ENCODE measurements at regions of chr1 and their contacts with region 1.

Region 1: DNA sequence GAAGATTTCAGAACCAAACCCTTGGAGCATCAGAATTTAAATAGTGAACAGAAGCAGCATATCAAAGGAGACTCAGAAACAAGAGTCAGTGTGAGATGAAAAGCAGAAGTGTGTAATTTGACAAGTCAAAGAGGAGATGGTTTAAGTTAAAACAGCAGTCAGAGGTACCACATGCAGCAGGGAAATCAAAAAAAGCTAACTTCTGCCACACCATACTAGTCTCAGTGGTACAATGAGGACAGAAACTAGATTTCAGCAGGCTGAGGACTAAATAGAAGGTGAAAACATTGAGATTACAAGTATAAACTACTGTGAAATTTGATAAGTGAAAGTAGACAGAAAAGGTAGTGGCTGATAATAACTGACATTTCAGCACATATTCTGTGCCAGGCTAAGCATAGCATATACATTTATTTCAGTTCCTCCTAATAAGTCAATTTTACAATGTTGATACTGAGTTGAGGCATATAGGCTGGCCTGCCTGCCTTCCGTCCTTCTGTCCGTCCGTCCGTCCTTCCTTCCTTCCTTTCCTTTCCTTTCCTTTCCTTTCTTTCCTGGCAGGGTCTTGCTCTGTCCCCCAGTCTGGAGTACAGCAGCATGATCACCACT is 12.6 kb downstream of the SUCO start:
- DNase-seq: no peak
- ATAC-seq: peak; percentile 11
- H3K4me3 ChIP-seq: no peak overlapping the region
- H3K27ac ChIP-seq: no peak overlapping the region
- H3K4me1 ChIP-seq: peaks cover 15 to 30% of the 10 kb centered on the region in 2 experiments
- H3K27me3 ChIP-seq: no peaks in the 10 kb centered on the region
- CTCF ChIP-seq: no peak
- EP300 ChIP-seq: no peak
- POLR2A ChIP-seq: no peak
- RAD21 ChIP-seq: no peak

Region 2: GRCh38 chr1:171965777-171966176 is 579.7 kb before region 1 on chr1:
- CTCF ChIA-PET with region 1: no interaction called
- POLR2A ChIA-PET with region 1: no interaction called
- in situ Hi-C with region 1: no loop called
- intact Hi-C with region 1: no loop called
- DNase-seq: no peak
- ATAC-seq: no peak
- H3K4me3 ChIP-seq: no peak overlapping the region
- H3K27ac ChIP-seq: no peak overlapping the region
- H3K4me1 ChIP-seq: no peaks in the 10 kb centered on the region; a peak in 1 of 5 replicates
- H3K27me3 ChIP-seq: no peaks in the 10 kb centered on the region
- CTCF ChIP-seq: no peak
- EP300 ChIP-seq: no peak
- POLR2A ChIP-seq: no peak
- RAD21 ChIP-seq: no peak

Region 3: GRCh38 chr1:172414331-172414730 is 131.2 kb before region 1 on chr1:
- CTCF ChIA-PET with region 1: no interaction called
- POLR2A ChIA-PET with region 1: no interaction called
- in situ Hi-C with region 1: no loop called
- intact Hi-C with region 1: no loop called
- DNase-seq: no peak
- ATAC-seq: no peak
- H3K4me3 ChIP-seq: no peak overlapping the region
- H3K27ac ChIP-seq: no peak overlapping the region
- H3K4me1 ChIP-seq: no peaks in the 10 kb centered on the region
- H3K27me3 ChIP-seq: no peaks in the 10 kb centered on the region; a peak in 1 of 5 replicates
- CTCF ChIP-seq: no peak
- EP300 ChIP-seq: no peak
- POLR2A ChIP-seq: no peak
- RAD21 ChIP-seq: no peak

Region 4: DNA sequence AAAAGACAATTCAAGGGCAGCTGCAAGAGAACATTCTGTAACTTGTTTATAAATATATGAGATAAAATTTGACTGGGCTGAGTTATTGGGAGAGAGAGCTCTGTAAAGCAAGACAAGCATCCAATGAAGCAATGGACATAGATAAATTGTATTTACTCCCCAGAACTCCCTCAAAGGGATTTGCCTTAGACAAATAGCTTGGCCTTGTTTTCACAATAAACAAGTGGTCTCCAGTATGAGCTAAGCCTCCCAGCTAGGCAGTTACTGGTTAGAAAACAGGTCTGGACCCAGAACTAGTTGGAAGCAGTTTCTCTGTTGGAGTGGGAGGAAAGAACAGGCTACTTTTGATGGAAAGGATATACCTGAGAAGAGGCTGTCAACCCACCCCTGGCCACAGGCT is 37.8 kb before region 1 on chr1:
- CTCF ChIA-PET with region 1: no interaction called
- POLR2A ChIA-PET with region 1: no interaction called
- in situ Hi-C with region 1: no loop called
- intact Hi-C with region 1: no loop called
- DNase-seq: no peak
- ATAC-seq: peak; percentile 50; the same call in 2 of the 3 replicates
- H3K4me3 ChIP-seq: no peak overlapping the region
- H3K27ac ChIP-seq: no peak overlapping the region
- H3K4me1 ChIP-seq: no peaks in the 10 kb centered on the region
- H3K27me3 ChIP-seq: no peaks in the 10 kb centered on the region; a peak in 1 of 5 replicates
- CTCF ChIP-seq: no peak
- EP300 ChIP-seq: no peak
- POLR2A ChIP-seq: no peak
- RAD21 ChIP-seq: no peak

Region 5: GRCh38 chr1:172532700-172533509 is 12.6 kb before region 1 on chr1 and contains the start of gene SUCO:
- CTCF ChIA-PET with region 1: no interaction called
- POLR2A ChIA-PET with region 1: interaction called, 37 read pairs
- in situ Hi-C with region 1: no loop called
- intact Hi-C with region 1: no loop called
- DNase-seq: peak; percentile 99 to 100 (median 99)
- ATAC-seq: peak; percentile 92
- H3K4me3 ChIP-seq: peak within 1 kb of the TSS; percentile 59
- H3K27ac ChIP-seq: peak within 1 kb of the TSS; percentile 99
- H3K4me1 ChIP-seq: peaks cover 3 to 42% of the 10 kb centered on the region in 2 experiments; a peak in 3 of 5 replicates
- H3K27me3 ChIP-seq: no peaks in the 10 kb centered on the region
- CTCF ChIP-seq: peak in 1 of 3 experiments; percentile 21; a peak in 2 of 6 replicates
- EP300 ChIP-seq: no peak; the same call in 1 of the 2 replicates
- POLR2A ChIP-seq: peak; percentile 93
- RAD21 ChIP-seq: peak; percentile 24 to 30; a peak in 3 of 4 replicates
- polyA plus RNA-seq, gene SUCO: 2.5 to 3.6 TPM

Measured in K562 (cell line).